Posterior vena cava (tissue), 2 donors: ENCODE measurements at regions of chr10 and their contacts with region 1.

Region 1: GRCh38 chr10:88932539-88933256 is 19.9 kb downstream of the ACTA2 start:
- DNase-seq: no peak

Region 2: GRCh38 chr10:88707429-88708285 is 225.0 kb before region 1 on chr10:
- intact Hi-C with region 1: no loop called
- DNase-seq: no peak

Region 3: DNA sequence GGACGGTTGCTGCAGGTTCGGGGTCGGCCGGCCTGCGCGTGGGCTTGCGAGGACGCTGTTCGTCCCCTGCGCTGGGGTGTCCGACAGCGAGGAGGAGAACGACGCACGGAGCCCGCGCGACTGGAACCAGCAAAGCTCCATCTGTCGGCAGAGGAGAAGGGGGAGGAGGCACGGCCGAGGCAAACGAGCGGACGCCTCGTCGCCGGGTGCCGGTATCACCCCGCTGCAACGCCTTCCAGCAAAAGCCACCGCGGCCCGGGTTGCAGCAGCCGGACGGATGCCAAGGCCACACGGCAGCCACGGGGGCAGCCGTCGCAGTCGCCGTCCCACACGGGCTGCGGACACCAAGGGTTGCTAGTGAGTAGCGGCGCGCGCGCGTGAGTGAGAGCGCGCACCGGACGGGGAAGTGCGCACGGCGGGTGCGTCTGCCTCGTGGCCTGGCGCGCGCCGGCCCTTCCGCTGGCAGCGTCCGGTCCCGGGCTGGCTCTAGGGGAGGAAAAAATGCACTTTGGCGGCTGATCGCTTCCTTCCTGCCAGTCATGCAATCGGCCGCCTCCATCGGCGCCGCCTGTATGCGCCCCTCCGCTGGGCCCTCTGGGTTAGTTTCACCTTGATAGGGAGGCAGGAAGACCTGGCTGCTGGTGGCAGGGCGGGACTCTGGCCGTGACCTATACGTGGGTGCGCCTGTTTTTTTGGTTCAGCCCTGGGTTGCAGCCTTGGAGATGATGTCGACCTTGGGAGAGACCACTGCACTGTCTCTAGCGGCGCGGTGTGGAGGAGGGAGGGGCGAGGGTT is 52.2 kb before region 1 on chr10:
- intact Hi-C with region 1: loop called in 1 of 2 experiments (anchors 2 kb)
- DNase-seq: peak; percentile 96

Region 4: DNA sequence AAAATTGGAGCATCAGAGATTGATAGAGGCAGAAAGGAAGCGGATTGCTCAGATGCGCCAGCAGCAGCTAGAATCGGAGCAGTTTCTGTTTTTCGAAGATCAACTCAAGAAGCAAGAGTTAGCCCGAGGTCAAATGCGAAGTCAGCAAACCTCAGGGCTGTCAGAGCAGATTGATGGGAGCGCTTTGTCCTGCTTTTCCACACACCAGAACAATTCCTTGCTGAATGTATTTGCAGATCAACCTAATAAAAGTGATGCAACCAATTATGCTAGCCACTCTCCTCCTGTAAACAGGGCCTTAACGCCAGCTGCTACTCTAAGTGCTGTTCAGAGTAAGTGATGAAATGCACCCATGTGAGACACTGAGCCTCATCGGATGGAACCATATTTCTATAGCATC is 19.6 kb before region 1 on chr10:
- intact Hi-C with region 1: no loop called
- DNase-seq: no peak

Region 5: DNA sequence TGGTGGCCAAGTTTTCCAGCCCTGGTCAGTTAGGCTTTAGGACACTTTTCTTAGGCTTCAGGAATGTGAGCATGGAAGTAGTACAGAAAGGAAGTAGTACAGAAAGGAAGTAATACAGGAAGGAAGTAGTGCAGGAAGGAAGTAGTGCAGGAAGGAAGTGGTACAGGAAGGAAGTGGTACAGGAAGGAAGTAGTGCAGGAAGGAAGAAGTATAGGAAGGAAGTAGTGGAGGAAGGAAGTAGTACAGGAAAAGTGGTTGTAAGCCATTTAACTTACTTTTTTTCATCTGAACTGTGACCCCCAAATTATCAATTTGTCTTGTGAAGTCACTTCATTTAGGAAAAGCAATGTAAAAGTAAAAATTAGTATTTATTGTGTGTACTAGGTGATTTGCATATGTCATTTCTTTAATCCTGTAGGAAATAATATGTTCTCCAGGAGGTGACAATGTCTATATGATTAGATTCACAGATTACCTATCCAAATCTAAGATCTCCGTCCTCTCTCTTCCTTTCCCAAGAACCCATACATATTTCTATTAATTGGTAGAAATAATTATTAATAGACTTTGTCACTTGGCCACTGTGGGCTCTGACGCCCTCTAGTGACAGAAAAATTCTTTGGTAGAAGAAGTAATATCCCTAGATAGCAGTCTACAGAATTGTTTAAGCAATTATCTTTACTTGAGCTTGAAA is 54.0 kb after region 1 on chr10:
- intact Hi-C with region 1: loop called in 1 of 2 experiments (anchors 5 kb)
- DNase-seq: no peak